ENCODE measurements at regions of chr13 and their contacts with region 1.

Region 1: GRCh38 chr13:30572859-30573275 is 44.9 kb upstream of the USPL1 start:
- DNase-seq: peak; percentile 71
- H3K4me3 ChIP-seq: peak overlapping the region; percentile 38
- H3K27ac ChIP-seq: peak overlapping the region; percentile 83
- H3K4me1 ChIP-seq: peaks cover 48% of the 10 kb centered on the region
- H3K27me3 ChIP-seq: no peaks in the 10 kb centered on the region
- CTCF ChIP-seq: peak; percentile 54

Region 2: DNA sequence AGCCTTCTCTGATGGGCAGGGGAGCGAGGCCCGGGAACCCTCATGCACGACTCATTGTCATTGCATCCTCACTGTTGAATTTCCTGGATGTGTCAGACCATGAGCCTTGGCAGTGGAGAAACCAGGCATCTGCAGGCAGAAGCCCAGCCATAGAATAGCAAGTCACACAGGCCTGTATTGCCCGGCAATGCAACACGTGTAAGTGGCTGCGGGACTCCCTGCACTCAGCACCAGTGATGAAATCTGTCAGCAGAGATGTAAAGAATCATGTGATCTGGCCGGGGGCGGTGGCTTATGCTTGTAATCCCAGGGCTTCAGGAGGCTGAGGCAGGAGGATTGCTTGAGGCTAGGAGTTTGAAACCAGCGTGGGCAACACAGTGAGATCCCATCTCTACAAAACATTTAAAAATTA is 465.3 kb before region 1 on chr13:
- CTCF ChIA-PET with region 1: no interaction called
- POLR2A ChIA-PET with region 1: no interaction called
- intact Hi-C with region 1: no loop called
- DNase-seq: no peak
- H3K4me3 ChIP-seq: no peak overlapping the region
- H3K27ac ChIP-seq: no peak overlapping the region
- H3K4me1 ChIP-seq: peaks cover 3% of the 10 kb centered on the region
- H3K27me3 ChIP-seq: no peaks in the 10 kb centered on the region
- CTCF ChIP-seq: no peak

Region 3: GRCh38 chr13:30465585-30466357 is 107.1 kb before region 1 on chr13 and contains the start of gene HMGB1:
- CTCF ChIA-PET with region 1: no interaction called
- POLR2A ChIA-PET with region 1: no interaction called
- intact Hi-C with region 1: loop called (anchors 5 kb)
- DNase-seq: peak; percentile 100
- H3K4me3 ChIP-seq: peak within 1 kb of the TSS; percentile 82
- H3K27ac ChIP-seq: peak within 1 kb of the TSS; percentile 100
- H3K4me1 ChIP-seq: peaks cover 32% of the 10 kb centered on the region
- H3K27me3 ChIP-seq: no peaks in the 10 kb centered on the region
- CTCF ChIP-seq: no peak
- total RNA-seq, gene HMGB1: 1,533 and 1,602 TPM in 2 replicates

Region 4: GRCh38 chr13:30617315-30618185 is 44.7 kb after region 1 on chr13 and contains the start of gene USPL1:
- CTCF ChIA-PET with region 1: no interaction called
- POLR2A ChIA-PET with region 1: interaction called, 26 read pairs
- intact Hi-C with region 1: no loop called
- DNase-seq: peak; percentile 99
- H3K4me3 ChIP-seq: peak within 1 kb of the TSS; percentile 82
- H3K27ac ChIP-seq: peak within 1 kb of the TSS; percentile 99
- H3K4me1 ChIP-seq: peaks cover 7% of the 10 kb centered on the region
- H3K27me3 ChIP-seq: no peaks in the 10 kb centered on the region
- CTCF ChIP-seq: no peak; the same call in 1 of the 2 replicates
- total RNA-seq, gene USPL1: 22.8 and 28.5 TPM in 2 replicates

Region 5: DNA sequence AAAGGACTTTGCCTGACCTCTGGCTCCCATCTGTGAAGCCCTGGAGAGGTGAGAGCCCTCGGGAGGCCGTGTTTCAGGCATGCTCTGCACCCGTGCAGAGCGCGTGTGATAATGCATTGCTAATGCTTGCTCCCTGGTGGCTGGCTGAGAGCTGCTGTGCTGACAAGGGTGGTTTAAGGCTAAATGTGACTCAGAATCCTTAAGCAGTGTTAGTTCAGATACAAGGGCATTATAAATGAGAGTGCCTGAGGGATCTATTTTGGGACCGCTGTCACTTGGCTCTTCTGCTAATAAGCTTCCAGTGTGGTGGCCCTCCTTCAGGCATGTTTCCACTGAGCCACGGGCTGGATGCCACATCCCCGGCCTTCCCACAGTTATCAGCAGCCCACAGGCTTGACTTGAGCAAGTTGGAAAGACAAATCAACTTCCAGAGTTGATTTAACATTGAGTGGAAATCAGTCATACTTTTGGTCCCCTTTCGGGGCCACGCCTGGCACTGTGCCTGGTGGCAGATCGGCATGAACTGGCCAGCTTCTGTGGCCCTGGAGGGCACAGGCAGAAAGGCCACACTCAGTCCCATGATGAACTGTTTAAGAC is 179.4 kb after region 1 on chr13:
- CTCF ChIA-PET with region 1: no interaction called
- POLR2A ChIA-PET with region 1: no interaction called
- intact Hi-C with region 1: no loop called
- DNase-seq: no peak
- H3K4me3 ChIP-seq: no peak overlapping the region
- H3K27ac ChIP-seq: no peak overlapping the region
- H3K4me1 ChIP-seq: no peaks in the 10 kb centered on the region
- H3K27me3 ChIP-seq: no peaks in the 10 kb centered on the region
- CTCF ChIP-seq: no peak

Region 6: DNA sequence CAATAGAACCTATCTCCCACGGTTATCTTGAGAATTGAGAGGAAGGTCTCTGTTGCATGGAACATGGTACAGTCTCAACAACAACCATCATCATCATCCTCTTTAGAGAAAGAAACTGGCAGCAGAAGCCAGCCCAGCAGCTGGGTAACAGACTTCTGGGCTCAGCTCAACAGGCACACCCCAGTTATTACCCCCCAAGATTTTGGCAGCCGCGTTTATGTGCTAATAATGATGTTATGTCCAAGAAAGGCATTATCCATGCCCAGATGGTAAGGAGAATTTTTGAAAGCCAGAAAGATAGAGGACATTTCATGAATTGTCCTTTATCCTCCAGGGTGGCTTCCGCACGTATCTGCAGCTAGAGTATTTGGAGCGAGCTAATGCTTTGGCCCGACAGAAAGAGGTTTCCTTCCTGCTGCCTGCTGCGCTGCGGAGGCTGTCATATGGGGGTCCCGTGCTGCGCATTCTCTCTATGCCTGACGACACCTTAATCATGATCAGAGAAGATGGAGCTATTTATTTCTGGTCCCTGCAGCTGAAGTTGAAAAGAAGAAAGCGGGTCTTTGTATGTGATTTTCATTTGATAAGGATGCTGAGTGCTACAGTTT is 449.5 kb after region 1 on chr13:
- CTCF ChIA-PET with region 1: interaction called, 12 read pairs
- POLR2A ChIA-PET with region 1: no interaction called
- intact Hi-C with region 1: no loop called
- DNase-seq: peak; percentile 89
- H3K4me3 ChIP-seq: peak overlapping the region; percentile 10
- H3K27ac ChIP-seq: peak overlapping the region; percentile 99
- H3K4me1 ChIP-seq: peaks cover 38% of the 10 kb centered on the region
- H3K27me3 ChIP-seq: no peaks in the 10 kb centered on the region
- CTCF ChIP-seq: no peak